Right ventricle myocardium superior (tissue), 1 donor: ENCODE measurements at regions of chr20 and their contacts with region 1.

Region 1: DNA sequence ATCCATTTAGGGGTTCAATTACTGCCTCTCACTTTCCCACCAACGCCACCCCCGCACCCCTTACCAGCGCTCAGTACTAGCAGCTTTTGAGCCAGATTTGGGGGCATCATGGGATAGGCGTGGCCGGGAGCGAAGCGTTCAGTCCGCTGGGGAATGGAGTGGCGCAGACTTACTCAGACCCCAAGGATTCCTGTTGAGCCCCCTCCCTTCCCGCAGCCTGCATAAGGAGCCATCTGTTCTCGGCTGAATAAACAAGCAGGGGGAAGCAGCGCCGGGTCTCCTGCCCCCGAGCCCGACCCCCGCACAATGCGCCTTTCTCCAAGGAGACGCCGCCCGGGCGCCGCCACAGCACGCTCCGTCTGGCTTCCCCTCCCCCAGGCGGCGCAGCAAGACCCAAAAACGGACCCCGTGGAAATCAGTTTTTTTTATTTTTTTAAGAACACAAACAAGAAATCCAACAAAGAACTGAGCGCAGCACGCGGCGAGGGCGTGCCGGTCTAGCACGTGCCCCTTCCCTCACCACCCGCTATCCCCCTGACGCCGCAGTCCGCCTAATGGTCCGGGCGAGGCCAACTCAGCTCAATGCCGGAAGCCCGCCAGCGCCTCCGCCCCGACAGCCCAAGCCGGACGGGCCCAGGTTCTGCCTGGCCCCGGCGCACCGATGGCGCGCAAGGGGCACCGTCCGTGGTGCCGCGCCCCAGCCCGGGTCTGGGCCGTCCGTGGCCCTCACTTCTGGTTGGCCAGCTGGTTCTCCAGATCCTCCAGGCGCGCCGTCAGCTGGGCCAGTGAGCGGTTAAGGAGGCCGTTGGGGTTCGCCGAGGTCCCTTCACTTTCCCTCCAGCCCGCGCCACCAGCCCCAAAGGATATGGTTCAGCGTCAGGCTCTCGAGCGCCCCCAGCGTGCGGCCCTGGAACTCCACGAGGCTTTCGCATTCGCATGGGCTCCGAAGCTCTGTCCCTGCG is 13.3 kb upstream of the RBPJL start:
- DNase-seq: peak; percentile 90
- ATAC-seq: peak; percentile 91

Region 2: DNA sequence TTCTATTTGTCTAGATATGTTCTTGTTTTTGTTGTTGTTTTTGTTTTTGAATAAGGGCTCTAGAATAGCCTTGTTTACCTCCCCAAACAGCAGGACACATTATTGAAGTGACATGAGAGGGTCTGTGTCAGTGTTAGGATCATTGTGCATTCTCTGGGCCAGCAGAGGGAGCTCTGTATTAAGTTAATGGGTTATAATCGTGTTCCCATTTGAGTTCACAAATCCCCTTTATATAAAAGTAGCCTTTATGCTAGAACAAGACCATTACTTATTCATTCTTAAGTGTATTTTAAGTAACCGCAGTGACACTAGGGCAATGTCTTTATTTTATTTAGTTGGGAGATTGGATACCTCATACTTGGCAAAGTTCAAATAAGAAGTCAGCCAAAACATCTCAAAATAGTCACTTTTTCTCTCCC is 282.2 kb before region 1 on chr20:
- intact Hi-C with region 1: loop called (anchors 10 kb)
- DNase-seq: no peak
- ATAC-seq: peak; percentile 77